ENCODE measurements at regions of chr19 and their contacts with region 1.

Region 1: GRCh38 chr19:2722541-2723344 is 1.6 kb upstream of the DIRAS1 start:
- DNase-seq: peak; percentile 74 to 90
- H3K4me3 ChIP-seq: peak overlapping the region in 1 of 2 donors; percentile 40
- H3K27ac ChIP-seq: peak overlapping the region; percentile 44 to 58
- H3K4me1 ChIP-seq: peaks cover 16 to 17% of the 10 kb centered on the region in 2 donors
- H3K27me3 ChIP-seq: peaks cover 11% of the 10 kb centered on the region
- CTCF ChIP-seq: no peak

Region 2: DNA sequence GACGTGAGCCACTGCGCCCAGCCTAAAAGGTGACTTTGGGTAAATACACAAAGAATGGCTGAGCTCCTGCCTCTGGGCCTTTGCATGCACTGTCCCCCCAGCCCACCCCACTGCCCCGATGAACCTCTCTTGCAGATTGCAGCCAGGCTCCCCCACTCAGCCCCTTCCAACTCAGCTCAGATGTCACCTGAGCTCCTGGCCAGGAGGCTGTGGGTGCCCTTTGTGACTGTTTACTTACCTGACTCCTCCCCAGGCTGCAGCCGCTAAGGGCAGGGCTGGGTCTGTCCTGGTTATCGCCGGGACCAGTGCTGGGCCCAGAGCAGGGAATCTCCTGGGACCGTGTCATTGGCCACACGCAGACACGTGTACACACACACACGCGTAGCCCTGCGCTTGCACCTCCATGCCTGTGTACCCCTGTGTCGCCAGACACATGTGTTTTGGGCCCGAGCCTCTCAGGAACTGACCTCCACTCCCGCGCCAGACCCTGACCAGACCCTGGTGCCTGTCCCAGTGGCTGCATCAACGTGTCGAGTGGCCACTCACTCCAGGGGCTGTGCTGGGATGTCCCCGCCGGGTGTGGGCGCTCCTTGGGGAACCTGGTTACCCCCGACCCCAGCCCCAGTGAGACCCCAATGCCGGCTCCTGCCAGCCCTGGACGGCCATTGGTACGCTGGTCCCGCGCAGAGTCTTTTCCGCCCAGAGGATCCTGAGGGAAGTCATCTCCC is 1418.4 kb before region 1 on chr19:
- intact Hi-C with region 1: no loop called
- DNase-seq: no peak
- H3K4me3 ChIP-seq: no peak overlapping the region
- H3K27ac ChIP-seq: no peak overlapping the region
- H3K4me1 ChIP-seq: no peaks in the 10 kb centered on the region
- H3K27me3 ChIP-seq: no peaks in the 10 kb centered on the region
- CTCF ChIP-seq: no peak

Region 3: GRCh38 chr19:2739602-2740313 is 17.0 kb after region 1 on chr19 and contains the start of gene SLC39A3:
- intact Hi-C with region 1: loop called (anchors 1 kb)
- DNase-seq: peak; percentile 94 to 99
- H3K4me3 ChIP-seq: peak within 1 kb of the TSS; percentile 96 to 100
- H3K27ac ChIP-seq: peak within 1 kb of the TSS; percentile 53
- H3K4me1 ChIP-seq: peaks cover 6 to 11% of the 10 kb centered on the region in 2 donors
- H3K27me3 ChIP-seq: no peaks in the 10 kb centered on the region
- CTCF ChIP-seq: peak; percentile 20 to 40 (median 27)
- total RNA-seq, gene SLC39A3: 72.7 TPM

Region 4: DNA sequence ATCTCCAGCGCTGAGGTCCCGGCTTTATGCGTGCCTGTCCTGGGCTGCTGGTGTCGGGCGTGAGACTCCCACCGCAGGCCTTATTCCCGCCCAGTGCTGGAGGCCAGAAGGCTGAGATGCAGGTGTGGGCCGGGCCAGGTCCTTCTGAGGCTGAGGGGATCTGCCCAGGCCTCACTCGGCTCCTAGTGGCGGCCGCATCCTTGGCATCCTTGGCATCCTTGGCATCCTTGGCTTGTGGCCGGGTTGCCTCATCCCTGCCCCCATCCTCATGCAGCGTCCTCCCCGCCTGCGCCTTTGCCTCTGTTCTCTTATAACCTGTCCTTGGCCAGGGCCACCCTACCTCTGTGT is 393.5 kb after region 1 on chr19:
- intact Hi-C with region 1: no loop called
- DNase-seq: no peak
- H3K4me3 ChIP-seq: no peak overlapping the region
- H3K27ac ChIP-seq: no peak overlapping the region
- H3K4me1 ChIP-seq: no peaks in the 10 kb centered on the region
- H3K27me3 ChIP-seq: no peaks in the 10 kb centered on the region
- CTCF ChIP-seq: no peak